ENCODE measurements at regions of chr10 and their contacts with region 1.

Region 1: GRCh38 chr10:58518775-58519174 is 6.1 kb downstream of the BICC1 start:
- DNase-seq: peak; percentile 63
- H3K4me3 Mint-ChIP-seq: peak overlapping the region; percentile 77
- H3K27ac Mint-ChIP-seq: peak overlapping the region; percentile 89
- H3K4me1 Mint-ChIP-seq: peaks cover 60% of the 10 kb centered on the region
- H3K27me3 Mint-ChIP-seq: no peaks in the 10 kb centered on the region
- CTCF ChIP-seq: no peak

Region 2: GRCh38 chr10:58137813-58138212 is 381.0 kb before region 1 on chr10:
- CTCF ChIA-PET with region 1: no interaction called
- intact Hi-C with region 1: no loop called
- DNase-seq: peak; percentile 65
- H3K4me3 Mint-ChIP-seq: peak overlapping the region; percentile 55
- H3K27ac Mint-ChIP-seq: peak overlapping the region; percentile 71
- H3K4me1 Mint-ChIP-seq: peaks cover 25% of the 10 kb centered on the region
- H3K27me3 Mint-ChIP-seq: no peaks in the 10 kb centered on the region
- CTCF ChIP-seq: no peak

Region 3: GRCh38 chr10:58414270-58415041 is 104.3 kb before region 1 on chr10:
- CTCF ChIA-PET with region 1: interaction called, 7 read pairs
- intact Hi-C with region 1: loop called (anchors 2 kb)
- DNase-seq: peak; percentile 63
- H3K4me3 Mint-ChIP-seq: no peak overlapping the region
- H3K27ac Mint-ChIP-seq: no peak overlapping the region
- H3K4me1 Mint-ChIP-seq: peaks cover 32% of the 10 kb centered on the region
- H3K27me3 Mint-ChIP-seq: no peaks in the 10 kb centered on the region
- CTCF ChIP-seq: peak; percentile 71

Region 4: GRCh38 chr10:58435297-58435985 is 83.3 kb before region 1 on chr10:
- CTCF ChIA-PET with region 1: interaction called, 4 read pairs
- intact Hi-C with region 1: loop called (anchors 5 kb)
- DNase-seq: peak; percentile 78
- H3K4me3 Mint-ChIP-seq: peak overlapping the region; percentile 48
- H3K27ac Mint-ChIP-seq: peak overlapping the region; percentile 89
- H3K4me1 Mint-ChIP-seq: peaks cover 57% of the 10 kb centered on the region
- H3K27me3 Mint-ChIP-seq: no peaks in the 10 kb centered on the region
- CTCF ChIP-seq: no peak

Region 5: DNA sequence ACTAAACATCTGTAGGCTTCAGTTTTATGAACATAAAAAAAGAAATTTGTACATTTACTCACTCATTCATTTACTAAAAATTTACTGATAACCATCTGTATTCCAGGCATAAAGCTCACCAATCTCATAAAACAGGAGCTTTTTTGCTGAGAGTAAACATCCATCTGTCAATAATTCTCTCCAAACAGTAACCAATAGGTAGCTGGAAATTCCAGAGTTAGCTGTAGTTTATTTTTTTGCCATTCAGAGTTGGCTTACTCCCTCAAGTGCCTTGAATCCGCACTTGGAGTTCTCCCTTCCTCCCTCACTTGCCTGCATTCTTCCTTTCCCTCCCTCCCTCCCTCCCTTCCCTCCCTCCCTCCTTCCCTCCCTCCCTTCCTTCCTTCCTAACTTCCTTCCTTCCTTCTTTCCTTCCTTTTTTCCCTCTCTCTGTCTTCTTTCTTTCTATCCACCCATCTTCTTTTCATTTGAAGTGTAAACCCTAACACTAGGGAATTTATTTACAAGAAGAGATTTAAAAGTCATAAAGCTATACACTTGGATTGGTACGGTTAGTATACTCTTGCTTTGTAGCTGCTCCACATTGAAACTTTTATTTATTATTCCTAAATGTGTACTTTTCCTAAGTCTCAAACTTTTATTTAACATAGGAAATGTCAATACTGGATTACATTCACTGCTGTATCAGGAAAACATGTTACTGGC is 50.7 kb before region 1 on chr10:
- CTCF ChIA-PET with region 1: interaction called, 7 read pairs
- intact Hi-C with region 1: loop called (anchors 1 kb)
- DNase-seq: no peak
- H3K4me3 Mint-ChIP-seq: peak overlapping the region; percentile 4
- H3K27ac Mint-ChIP-seq: no peak overlapping the region
- H3K4me1 Mint-ChIP-seq: peaks cover 50% of the 10 kb centered on the region
- H3K27me3 Mint-ChIP-seq: peaks cover 17% of the 10 kb centered on the region
- CTCF ChIP-seq: no peak

Region 6: GRCh38 chr10:58555170-58555929 is 36.6 kb after region 1 on chr10:
- CTCF ChIA-PET with region 1: no interaction called
- intact Hi-C with region 1: loop called (anchors 2 kb)
- DNase-seq: peak; percentile 51
- H3K4me3 Mint-ChIP-seq: peak overlapping the region; percentile 22
- H3K27ac Mint-ChIP-seq: peak overlapping the region; percentile 89
- H3K4me1 Mint-ChIP-seq: peaks cover 66% of the 10 kb centered on the region
- H3K27me3 Mint-ChIP-seq: no peaks in the 10 kb centered on the region
- CTCF ChIP-seq: no peak

Region 7: GRCh38 chr10:58641095-58641531 is 122.3 kb after region 1 on chr10:
- CTCF ChIA-PET with region 1: interaction called, 5 read pairs
- intact Hi-C with region 1: loop called (anchors 5 kb)
- DNase-seq: peak; percentile 46
- H3K4me3 Mint-ChIP-seq: peak overlapping the region; percentile 29
- H3K27ac Mint-ChIP-seq: peak overlapping the region; percentile 43
- H3K4me1 Mint-ChIP-seq: peaks cover 78% of the 10 kb centered on the region
- H3K27me3 Mint-ChIP-seq: no peaks in the 10 kb centered on the region
- CTCF ChIP-seq: no peak